GM12878 (cell line): ENCODE measurements at regions of chr7 and their contacts with region 1.

Region 1: DNA sequence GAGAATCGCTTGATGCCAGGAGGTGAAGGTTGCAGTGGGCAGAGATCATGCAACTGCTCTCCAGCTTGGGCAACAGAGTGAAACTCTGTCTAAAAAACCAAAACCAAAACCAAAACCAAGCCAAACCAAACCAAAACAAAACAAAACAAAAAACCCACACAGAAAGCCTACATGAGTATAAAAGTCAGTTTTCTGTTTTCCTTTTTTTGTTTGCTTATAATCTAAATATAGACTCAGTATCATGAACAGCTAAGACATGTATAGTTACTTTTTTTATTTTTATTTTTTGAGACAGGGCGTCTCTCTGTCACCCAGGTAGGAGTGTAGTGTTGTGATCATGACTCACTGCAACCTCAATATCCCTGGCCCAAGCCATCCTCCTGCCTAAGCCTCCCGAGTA is 16.8 kb upstream of the MTPN start:
- DNase-seq: no peak
- ATAC-seq: peak; percentile 84
- H3K4me3 ChIP-seq: no peak overlapping the region
- H3K27ac ChIP-seq: no peak overlapping the region
- H3K4me1 ChIP-seq: peaks cover 3% of the 10 kb centered on the region
- H3K27me3 ChIP-seq: no peaks in the 10 kb centered on the region
- CTCF ChIP-seq: no peak
- EP300 ChIP-seq: no peak
- POLR2A ChIP-seq: no peak
- RAD21 ChIP-seq: no peak

Region 2: DNA sequence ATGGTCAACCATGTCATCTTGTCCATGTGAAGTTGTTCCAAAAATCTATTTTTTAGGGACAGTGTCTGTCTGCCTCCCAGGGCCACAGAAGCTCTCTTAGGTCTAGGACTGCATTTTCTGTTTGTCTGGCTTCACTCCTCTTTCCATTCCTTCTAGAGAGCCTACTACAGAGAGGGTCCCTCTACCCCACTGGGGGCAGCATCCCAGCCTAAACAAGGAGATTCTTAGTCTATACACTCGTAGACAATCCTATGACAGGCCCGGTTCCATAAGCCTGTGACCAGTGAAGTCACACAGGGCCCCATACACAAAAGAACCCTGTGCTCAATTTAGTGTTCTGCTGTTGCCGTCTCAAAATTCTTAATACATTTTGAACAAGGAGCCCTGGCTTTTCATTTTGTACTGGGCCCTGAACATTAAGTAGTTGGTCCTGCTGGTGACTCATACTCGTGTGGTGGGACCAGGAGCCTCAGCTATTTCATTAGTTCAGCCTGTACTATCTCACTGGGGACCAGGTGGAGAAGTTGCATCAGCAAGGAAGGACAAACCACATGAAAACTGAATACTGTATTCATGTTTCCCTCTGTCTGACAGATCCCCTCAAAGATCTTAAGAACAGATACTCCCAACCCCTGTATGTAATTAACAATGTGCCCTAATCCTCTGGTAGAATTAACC is 221.8 kb before region 1 on chr7:
- CTCF ChIA-PET with region 1: no interaction called
- POLR2A ChIA-PET with region 1: no interaction called
- RAD21 ChIA-PET with region 1: no interaction called
- SMC1A ChIA-PET with region 1: no interaction called
- in situ Hi-C with region 1: no loop called
- intact Hi-C with region 1: no loop called
- DNase-seq: no peak
- ATAC-seq: no peak
- H3K4me3 ChIP-seq: no peak overlapping the region
- H3K27ac ChIP-seq: no peak overlapping the region
- H3K4me1 ChIP-seq: no peaks in the 10 kb centered on the region
- H3K27me3 ChIP-seq: no peaks in the 10 kb centered on the region; a peak in 1 of 4 replicates
- CTCF ChIP-seq: no peak
- EP300 ChIP-seq: no peak
- POLR2A ChIP-seq: no peak
- RAD21 ChIP-seq: no peak

Region 3: DNA sequence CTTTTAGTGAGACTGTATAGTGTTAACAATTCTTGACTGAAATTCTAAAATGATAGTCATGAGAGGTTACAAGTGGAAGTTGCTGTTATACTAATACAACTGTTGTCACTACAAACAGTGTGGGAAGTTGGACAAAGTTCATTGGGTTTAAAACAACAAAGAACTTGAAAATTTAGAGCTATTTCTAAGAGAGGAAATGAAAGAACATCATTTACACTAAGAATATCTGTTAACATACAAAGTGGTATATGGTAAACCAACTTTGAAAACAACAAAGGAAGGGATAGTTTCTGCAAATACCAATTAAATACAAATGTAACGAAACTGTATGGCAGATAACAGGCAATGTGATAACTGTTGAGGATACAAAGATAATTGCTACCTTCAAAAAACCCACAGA is 28.3 kb before region 1 on chr7:
- CTCF ChIA-PET with region 1: no interaction called
- POLR2A ChIA-PET with region 1: interaction called, 3 read pairs
- RAD21 ChIA-PET with region 1: no interaction called
- SMC1A ChIA-PET with region 1: interaction called, 13 read pairs
- in situ Hi-C with region 1: no loop called
- intact Hi-C with region 1: no loop called
- DNase-seq: peak; percentile 37
- ATAC-seq: peak; percentile 62
- H3K4me3 ChIP-seq: no peak overlapping the region; the same call in 1 of the 2 replicates
- H3K27ac ChIP-seq: peak overlapping the region; percentile 31; the same call in 1 of the 2 replicates
- H3K4me1 ChIP-seq: peaks cover 7% of the 10 kb centered on the region; the same call in 1 of the 2 replicates
- H3K27me3 ChIP-seq: no peaks in the 10 kb centered on the region
- CTCF ChIP-seq: no peak
- EP300 ChIP-seq: peak; percentile 62 to 75; a peak in 2 of 4 replicates
- POLR2A ChIP-seq: no peak
- RAD21 ChIP-seq: no peak